AG04450 (cell line): ENCODE measurements at regions of chrX and their contacts with region 1.

Region 1: DNA sequence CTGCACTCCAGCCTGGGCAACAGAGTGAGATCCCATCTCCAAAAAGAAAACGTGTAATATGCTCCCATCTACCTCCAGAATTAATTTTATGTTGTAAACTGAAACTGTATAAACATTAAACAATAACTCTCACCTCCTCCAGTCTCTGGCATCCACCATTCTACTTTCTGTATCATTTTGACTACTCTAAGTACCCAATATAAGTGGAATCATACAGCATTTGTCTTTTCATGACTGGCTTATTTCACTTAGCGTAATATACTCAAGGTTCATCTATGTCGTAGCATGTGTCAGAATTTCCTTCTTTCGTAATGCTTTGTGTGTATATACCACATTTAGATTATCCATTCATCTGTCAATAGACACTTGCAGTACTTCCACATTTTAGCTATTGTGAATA is 20.6 kb downstream of the F8 start:
- DNase-seq: no peak
- H3K4me3 ChIP-seq: no peak overlapping the region
- H3K27ac ChIP-seq: no peak overlapping the region
- H3K27me3 ChIP-seq: no peaks in the 10 kb centered on the region
- CTCF ChIP-seq: no peak

Region 2: DNA sequence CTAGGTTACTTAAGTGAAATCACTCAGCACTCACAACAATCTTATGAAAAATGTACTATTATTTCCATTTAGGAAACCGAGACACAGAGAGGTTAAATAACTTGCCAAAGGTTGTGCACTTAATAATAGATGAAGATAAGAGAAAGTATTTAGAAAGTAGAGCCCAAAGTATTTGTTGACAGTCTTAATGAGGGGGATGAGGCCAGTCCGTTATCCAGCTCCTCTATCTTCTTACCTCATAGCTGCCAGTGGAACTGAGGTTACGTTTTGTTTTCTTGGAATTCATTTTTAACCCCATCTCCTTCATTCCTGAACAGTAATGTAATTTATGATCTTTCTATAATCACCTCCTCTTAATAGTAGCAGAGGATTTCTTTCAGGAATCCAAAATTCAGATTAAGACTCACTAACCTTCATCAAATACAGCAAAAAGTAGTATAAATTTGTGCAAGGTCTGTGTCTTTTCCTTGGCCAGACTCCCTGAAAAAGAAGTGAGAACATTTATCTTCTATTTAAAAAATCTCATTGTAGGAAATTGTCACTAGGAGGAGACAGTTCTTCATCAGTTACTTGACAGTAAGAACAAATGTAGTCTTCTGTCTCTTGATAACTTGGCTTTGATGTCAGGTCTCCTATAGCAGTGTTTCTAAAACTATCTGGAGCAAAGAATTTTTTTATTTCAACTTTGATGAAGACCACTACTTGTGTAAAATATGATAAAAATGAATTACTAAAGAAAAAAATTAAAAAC is 14.9 kb before region 1 on chrX:
- CTCF ChIA-PET with region 1: interaction called, 13 read pairs
- POLR2A ChIA-PET with region 1: no interaction called
- DNase-seq: no peak
- H3K4me3 ChIP-seq: no peak overlapping the region
- H3K27ac ChIP-seq: no peak overlapping the region
- H3K27me3 ChIP-seq: peaks cover 3% of the 10 kb centered on the region
- CTCF ChIP-seq: no peak